Activated T-helper 1 cell treated with anti-CD3 and anti-CD28 coated beads, Interleukin-12 subunit alpha, Interleukin-12 subunit beta, Interleukin-2, Interleukin-4 antibody, amounts not matched to agents 30 ng/mL and 10 ng/mL and 1 ng/mL, durations not matched to agents 14 hours and 24 hours and 36 hours (primary cell): ENCODE measurements at regions of chrX and their contacts with region 1.

Region 1: GRCh38 chrX:2500267-2501075 is at the starts of genes DHRSX and ZBED1:
- DNase-seq: peak; percentile 53
- H3K4me3 Mint-ChIP-seq: peak within 1 kb of the TSS; percentile 88
- H3K27ac Mint-ChIP-seq: peak within 1 kb of the TSS; percentile 80
- H3K4me1 Mint-ChIP-seq: peaks cover 27% of the 10 kb centered on the region
- H3K27me3 Mint-ChIP-seq: peaks cover 2% of the 10 kb centered on the region
- total RNA-seq, gene DHRSX: 26.3 and 27.4 TPM in 2 replicates
- total RNA-seq, gene ZBED1: 39.8 and 41.6 TPM in 2 replicates

Region 2: GRCh38 chrX:1591102-1591900 is 909.2 kb before region 1 on chrX and contains the start of gene AKAP17A:
- intact Hi-C with region 1: loop called (anchors 2 kb)
- DNase-seq: peak; percentile 99
- H3K4me3 Mint-ChIP-seq: peak within 1 kb of the TSS; percentile 95
- H3K27ac Mint-ChIP-seq: peak within 1 kb of the TSS; percentile 93
- H3K4me1 Mint-ChIP-seq: peaks cover 10% of the 10 kb centered on the region
- H3K27me3 Mint-ChIP-seq: no peaks in the 10 kb centered on the region
- total RNA-seq, gene AKAP17A: 63.9 and 66.1 TPM in 2 replicates

Region 3: DNA sequence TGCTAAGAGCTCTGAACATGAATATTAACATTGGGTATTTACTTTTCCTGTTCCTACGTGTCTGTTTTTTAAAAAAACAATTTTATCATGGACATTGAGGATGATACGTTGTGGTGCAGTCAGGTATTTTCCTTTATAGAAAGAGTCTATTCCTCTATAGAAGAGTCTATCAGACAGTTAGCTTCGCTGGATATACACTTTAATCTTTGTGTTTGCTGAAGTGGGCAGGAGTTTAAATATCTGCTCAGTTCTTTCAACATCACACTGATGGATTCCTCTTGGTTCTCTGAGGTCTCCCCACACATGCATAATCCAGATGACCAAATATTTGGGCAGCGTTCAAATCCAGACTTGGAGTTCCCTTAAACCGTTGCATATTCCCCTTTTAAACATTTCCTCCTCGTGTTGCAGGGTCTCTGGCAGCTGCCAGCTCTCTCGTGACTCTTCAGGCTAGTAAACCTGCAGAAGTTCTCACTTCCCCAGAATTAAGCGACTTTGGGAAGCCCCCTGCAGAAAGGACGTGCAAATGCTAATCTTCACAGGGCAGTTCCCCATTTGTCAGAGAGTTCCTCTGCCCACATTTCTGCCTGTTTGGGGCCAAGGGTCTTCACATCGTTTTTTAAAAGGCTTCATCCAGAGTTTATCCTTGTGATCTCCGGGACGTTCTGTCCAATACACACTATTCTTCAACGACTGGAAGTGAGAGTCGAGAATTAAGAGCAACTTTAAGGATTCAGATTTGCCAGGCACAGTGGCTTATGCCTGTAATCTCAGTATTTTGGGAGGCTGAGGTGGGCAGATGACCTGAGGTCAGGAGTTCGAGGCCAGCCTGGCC is 20.8 kb after region 1 on chrX:
- intact Hi-C with region 1: no loop called
- DNase-seq: no peak
- H3K4me3 Mint-ChIP-seq: no peak overlapping the region
- H3K27ac Mint-ChIP-seq: no peak overlapping the region
- H3K4me1 Mint-ChIP-seq: peaks cover 4% of the 10 kb centered on the region
- H3K27me3 Mint-ChIP-seq: peaks cover 8% of the 10 kb centered on the region

Region 4: GRCh38 chrX:2589186-2590030 is 88.9 kb after region 1 on chrX:
- intact Hi-C with region 1: loop called (anchors 5 kb)
- DNase-seq: no peak
- H3K4me3 Mint-ChIP-seq: no peak overlapping the region
- H3K27ac Mint-ChIP-seq: no peak overlapping the region
- H3K4me1 Mint-ChIP-seq: peaks cover 17% of the 10 kb centered on the region
- H3K27me3 Mint-ChIP-seq: peaks cover 15% of the 10 kb centered on the region

Region 5: DNA sequence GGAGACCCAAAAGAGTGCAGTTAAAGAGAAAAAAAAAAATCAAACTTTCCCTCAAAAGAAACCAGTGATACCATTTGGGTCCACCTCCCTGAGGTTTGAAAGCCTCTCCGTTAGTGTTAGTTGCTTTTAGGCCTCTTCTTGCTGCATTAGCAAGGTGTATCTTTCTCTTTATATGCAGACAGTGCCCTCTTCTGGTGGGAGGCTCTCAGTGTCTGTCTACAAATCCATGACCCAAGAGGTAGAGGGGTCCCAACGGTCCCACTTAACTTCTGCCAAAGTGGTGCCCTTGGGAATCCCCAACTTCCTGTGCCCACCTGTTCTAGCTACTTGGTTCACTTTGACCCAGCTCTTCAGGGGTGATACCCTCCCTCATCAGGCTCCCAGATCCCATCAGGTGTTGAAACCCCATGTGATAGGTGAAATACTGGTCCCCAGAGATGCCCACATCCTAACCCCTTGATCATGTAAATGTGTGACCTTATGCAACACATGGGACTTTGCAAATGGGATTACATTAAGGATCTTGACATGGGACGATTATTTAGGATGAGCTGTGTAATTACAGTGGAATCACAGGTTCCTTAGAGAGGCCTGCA is 126.9 kb after region 1 on chrX:
- intact Hi-C with region 1: loop called (anchors 1 kb)
- DNase-seq: peak; percentile 25
- H3K4me3 Mint-ChIP-seq: no peak overlapping the region
- H3K27ac Mint-ChIP-seq: peak overlapping the region; percentile 10
- H3K4me1 Mint-ChIP-seq: peaks cover 28% of the 10 kb centered on the region
- H3K27me3 Mint-ChIP-seq: no peaks in the 10 kb centered on the region